Activated CD4-positive, alpha-beta memory T cell treated with anti-CD3 and anti-CD28 coated beads for 36 hours (primary cell): ENCODE measurements at regions of chr1 and their contacts with region 1.

Region 1: DNA sequence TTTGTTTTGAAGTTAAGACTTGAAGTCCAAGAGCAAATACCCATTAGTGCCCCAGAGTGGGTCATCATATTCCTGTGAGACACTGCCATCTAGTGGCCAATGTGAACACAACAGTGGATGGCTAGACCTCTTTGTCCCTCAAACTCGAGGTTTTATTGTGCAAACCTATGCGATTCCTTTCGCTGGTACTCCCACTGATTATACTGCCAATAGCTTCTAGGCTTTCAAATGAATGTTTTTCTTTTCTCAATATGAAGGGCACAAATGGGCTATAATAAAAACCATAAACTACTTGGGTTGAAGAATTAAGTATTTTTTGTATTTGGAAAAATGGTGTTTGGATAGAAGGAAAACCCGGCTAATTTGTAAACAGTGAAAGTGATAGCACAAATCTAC is 100.4 kb upstream of the ZNF281 start:
- DNase-seq: peak; percentile 75
- H3K4me3 Mint-ChIP-seq: no peak overlapping the region
- H3K27ac Mint-ChIP-seq: no peak overlapping the region
- H3K4me1 Mint-ChIP-seq: peaks cover 2% of the 10 kb centered on the region
- H3K27me3 Mint-ChIP-seq: peaks cover 5% of the 10 kb centered on the region

Region 2: GRCh38 chr1:199684686-199685273 is 825.4 kb before region 1 on chr1:
- CTCF ChIA-PET with region 1: interaction called, 24 read pairs
- POLR2A ChIA-PET with region 1: no interaction called
- intact Hi-C with region 1: loop called (anchors 1 kb)
- DNase-seq: peak; percentile 13
- H3K4me3 Mint-ChIP-seq: no peak overlapping the region
- H3K27ac Mint-ChIP-seq: no peak overlapping the region
- H3K4me1 Mint-ChIP-seq: no peaks in the 10 kb centered on the region
- H3K27me3 Mint-ChIP-seq: peaks cover 1% of the 10 kb centered on the region

Region 3: GRCh38 chr1:200139661-200140250 is 370.5 kb before region 1 on chr1:
- CTCF ChIA-PET with region 1: interaction called, 6 read pairs
- POLR2A ChIA-PET with region 1: no interaction called
- intact Hi-C with region 1: loop called (anchors 1 kb)
- DNase-seq: peak; percentile 27
- H3K4me3 Mint-ChIP-seq: no peak overlapping the region
- H3K27ac Mint-ChIP-seq: no peak overlapping the region
- H3K4me1 Mint-ChIP-seq: no peaks in the 10 kb centered on the region
- H3K27me3 Mint-ChIP-seq: no peaks in the 10 kb centered on the region

Region 4: DNA sequence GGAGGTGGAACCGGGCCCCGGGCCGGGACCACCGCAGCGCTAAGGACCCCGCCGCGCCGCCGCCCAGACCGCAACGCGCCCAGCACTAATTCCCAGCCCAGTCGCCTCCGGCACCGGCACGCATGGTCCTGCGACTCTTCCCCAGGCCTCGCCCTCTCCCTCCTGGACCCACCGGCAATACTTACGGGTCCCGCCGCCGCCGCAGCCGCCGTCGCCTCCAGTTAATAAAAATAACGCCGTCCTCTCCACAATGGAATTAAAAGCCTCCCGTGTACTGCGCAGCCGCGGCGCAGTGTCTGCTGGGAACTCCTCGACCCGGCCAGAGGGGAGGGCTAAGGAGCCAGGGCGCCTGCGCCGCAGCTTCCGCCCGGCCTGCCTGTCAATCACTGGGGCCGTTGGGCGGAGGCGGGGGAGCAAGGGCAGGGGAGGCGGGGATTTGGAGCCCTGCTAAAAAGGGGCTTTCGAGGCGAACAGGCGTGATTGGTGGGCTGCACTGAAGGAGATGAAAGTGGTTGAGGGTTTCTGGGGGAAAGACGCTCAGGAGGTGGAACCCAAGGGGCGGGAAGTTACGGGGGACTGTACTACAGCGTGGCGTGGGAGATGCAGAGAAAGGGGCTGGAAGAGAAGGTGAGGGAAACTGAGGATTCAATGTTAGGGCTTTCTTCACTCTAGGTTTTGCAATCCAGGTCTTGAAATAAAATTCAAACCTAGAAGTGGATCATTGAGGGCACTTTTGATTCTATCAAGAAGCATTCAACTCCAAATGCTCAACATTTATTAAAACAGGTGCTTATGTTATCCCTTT is 100.3 kb before region 1 on chr1 and contains the start of gene ZNF281:
- CTCF ChIA-PET with region 1: no interaction called
- POLR2A ChIA-PET with region 1: no interaction called
- intact Hi-C with region 1: no loop called
- DNase-seq: peak; percentile 97
- H3K4me3 Mint-ChIP-seq: peak within 1 kb of the TSS; percentile 87
- H3K27ac Mint-ChIP-seq: peak within 1 kb of the TSS; percentile 88
- H3K4me1 Mint-ChIP-seq: peaks cover 49% of the 10 kb centered on the region
- H3K27me3 Mint-ChIP-seq: no peaks in the 10 kb centered on the region
- total RNA-seq, gene ZNF281: 11.0 to 11.2 TPM

Region 5: GRCh38 chr1:200453553-200453905 is 56.7 kb before region 1 on chr1:
- CTCF ChIA-PET with region 1: no interaction called
- POLR2A ChIA-PET with region 1: no interaction called
- intact Hi-C with region 1: no loop called
- DNase-seq: no peak
- H3K4me3 Mint-ChIP-seq: no peak overlapping the region
- H3K27ac Mint-ChIP-seq: no peak overlapping the region
- H3K4me1 Mint-ChIP-seq: peaks cover 5% of the 10 kb centered on the region
- H3K27me3 Mint-ChIP-seq: no peaks in the 10 kb centered on the region

Region 6: DNA sequence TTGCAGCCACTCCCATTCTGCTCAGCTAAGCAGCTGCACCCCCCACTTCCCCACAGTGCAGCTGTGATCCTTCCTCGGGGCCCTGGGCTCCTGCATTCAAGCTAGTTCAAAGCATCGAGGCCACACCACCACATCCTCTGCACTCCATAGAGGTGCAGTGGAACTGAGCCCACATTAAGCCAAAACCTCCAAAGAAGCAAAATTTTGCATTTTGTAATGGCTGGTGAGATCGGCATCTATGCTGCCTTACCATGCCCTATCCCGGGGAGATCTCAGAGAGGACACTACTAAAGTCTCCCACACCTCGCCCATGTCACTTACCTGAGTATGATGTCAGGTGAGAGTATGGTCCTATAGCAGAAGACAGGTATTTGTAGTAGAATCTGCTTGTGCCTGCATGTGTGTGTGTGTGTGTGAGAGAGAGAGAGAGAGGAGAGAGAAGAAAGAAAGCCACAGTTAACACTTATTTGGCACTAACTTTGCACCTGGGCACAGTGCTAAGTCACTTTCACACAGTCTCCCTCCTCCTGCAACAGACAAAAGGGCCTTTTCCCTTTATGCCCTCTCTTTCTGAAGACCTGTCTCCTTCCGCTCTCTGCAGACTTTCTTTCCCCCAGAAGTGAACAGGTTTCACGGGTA is 20.5 kb after region 1 on chr1:
- CTCF ChIA-PET with region 1: no interaction called
- POLR2A ChIA-PET with region 1: no interaction called
- intact Hi-C with region 1: no loop called
- DNase-seq: peak; percentile 44
- H3K4me3 Mint-ChIP-seq: no peak overlapping the region
- H3K27ac Mint-ChIP-seq: no peak overlapping the region
- H3K4me1 Mint-ChIP-seq: peaks cover 18% of the 10 kb centered on the region
- H3K27me3 Mint-ChIP-seq: no peaks in the 10 kb centered on the region

Region 7: GRCh38 chr1:201172999-201173610 is 662.9 kb after region 1 on chr1:
- CTCF ChIA-PET with region 1: no interaction called
- POLR2A ChIA-PET with region 1: no interaction called
- intact Hi-C with region 1: no loop called
- DNase-seq: peak; percentile 48
- H3K4me3 Mint-ChIP-seq: no peak overlapping the region
- H3K27ac Mint-ChIP-seq: no peak overlapping the region
- H3K4me1 Mint-ChIP-seq: peaks cover 22% of the 10 kb centered on the region
- H3K27me3 Mint-ChIP-seq: peaks cover 5% of the 10 kb centered on the region